ENCODE measurements at regions of chr7 and their contacts with region 1.

Region 1: GRCh38 chr7:2354186-2354938 is at the start of gene EIF3B:
- DNase-seq: peak; percentile 86 to 93
- H3K4me3 ChIP-seq: peak within 1 kb of the TSS; percentile 97 to 99
- H3K27ac ChIP-seq: peak within 1 kb of the TSS; percentile 98
- H3K4me1 ChIP-seq: peaks cover 6 to 22% of the 10 kb centered on the region in 2 donors
- H3K27me3 ChIP-seq: no peaks in the 10 kb centered on the region
- CTCF ChIP-seq: peak in 2 of 4 experiments; percentile 8 to 31
- POLR2A ChIP-seq: peak in 1 of 2 donors; percentile 2
- total RNA-seq, gene EIF3B: 67.6 to 155 (median 95.2) TPM

Region 2: DNA sequence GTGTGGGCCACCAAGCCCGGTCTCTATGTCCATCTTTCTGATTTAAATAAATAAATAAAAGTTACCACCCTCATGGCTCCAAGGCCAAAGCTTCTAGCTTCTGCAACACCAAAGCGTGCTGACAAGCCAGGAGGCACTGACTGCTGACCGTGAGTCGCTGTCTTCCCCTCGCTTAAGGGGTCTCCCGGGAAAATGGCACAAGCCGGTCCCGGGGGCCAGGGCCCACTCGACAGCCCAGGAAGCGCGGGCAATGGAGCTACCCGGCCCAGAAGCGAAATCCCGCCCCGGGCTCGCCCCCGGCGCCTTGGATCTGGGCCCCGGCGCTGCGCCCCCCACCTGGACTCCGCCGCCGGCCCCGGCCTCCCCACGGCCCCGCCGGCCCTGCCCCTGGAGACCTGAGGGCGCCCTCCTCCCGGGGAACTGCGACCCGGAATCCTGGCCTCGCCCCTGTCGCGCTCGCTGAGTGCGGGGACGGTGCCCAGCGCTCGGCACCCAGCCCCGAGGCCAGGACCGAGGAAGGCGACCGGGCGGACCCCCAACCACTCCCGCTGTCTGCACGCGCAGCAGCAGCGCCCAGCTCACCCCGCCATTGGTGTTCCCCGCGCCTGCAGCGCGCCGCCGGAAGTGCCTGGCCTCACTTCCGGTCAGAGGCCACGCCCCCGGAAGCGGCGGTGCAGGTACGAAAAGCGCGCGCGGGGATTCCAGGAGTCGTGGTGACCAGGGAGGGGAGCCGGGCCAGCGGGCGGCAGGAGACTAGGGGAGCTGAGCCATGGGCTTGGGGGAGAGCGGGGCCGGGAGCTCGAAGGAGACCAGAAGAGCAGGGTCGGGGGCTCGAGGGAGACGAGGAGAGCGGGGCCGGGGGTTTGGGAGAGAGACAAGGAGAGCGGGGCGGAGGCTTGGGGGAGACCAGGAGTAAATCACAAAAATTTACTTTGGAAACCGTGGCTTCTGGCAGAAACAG is 112.5 kb before region 1 on chr7 and contains the starts of genes MRM2 and NUDT1:
- intact Hi-C with region 1: loop called (anchors 10 kb)
- DNase-seq: peak; percentile 74 to 83
- H3K4me3 ChIP-seq: peak within 1 kb of the TSS; percentile 74 to 89
- H3K27ac ChIP-seq: peak within 1 kb of the TSS; percentile 24 to 41
- H3K4me1 ChIP-seq: peaks cover 0 to 4% of the 10 kb centered on the region in 2 donors
- H3K27me3 ChIP-seq: no peaks in the 10 kb centered on the region
- CTCF ChIP-seq: no peak
- POLR2A ChIP-seq: peak; percentile 32 to 43
- total RNA-seq, gene MRM2: 2.1 to 29.4 (median 12.8) TPM
- total RNA-seq, gene NUDT1: 2.4 to 13.1 (median 7.6) TPM in 3 of 4 donors, not detected in the other

Region 3: GRCh38 chr7:2465928-2466327 is 111.6 kb after region 1 on chr7:
- intact Hi-C with region 1: no loop called
- DNase-seq: no peak
- H3K4me3 ChIP-seq: no peak overlapping the region
- H3K27ac ChIP-seq: no peak overlapping the region
- H3K4me1 ChIP-seq: no peaks in the 10 kb centered on the region
- H3K27me3 ChIP-seq: no peaks in the 10 kb centered on the region
- CTCF ChIP-seq: no peak
- POLR2A ChIP-seq: no peak